RWPE1 (cell line): ENCODE measurements at regions of chr11 and their contacts with region 1.

Region 1: DNA sequence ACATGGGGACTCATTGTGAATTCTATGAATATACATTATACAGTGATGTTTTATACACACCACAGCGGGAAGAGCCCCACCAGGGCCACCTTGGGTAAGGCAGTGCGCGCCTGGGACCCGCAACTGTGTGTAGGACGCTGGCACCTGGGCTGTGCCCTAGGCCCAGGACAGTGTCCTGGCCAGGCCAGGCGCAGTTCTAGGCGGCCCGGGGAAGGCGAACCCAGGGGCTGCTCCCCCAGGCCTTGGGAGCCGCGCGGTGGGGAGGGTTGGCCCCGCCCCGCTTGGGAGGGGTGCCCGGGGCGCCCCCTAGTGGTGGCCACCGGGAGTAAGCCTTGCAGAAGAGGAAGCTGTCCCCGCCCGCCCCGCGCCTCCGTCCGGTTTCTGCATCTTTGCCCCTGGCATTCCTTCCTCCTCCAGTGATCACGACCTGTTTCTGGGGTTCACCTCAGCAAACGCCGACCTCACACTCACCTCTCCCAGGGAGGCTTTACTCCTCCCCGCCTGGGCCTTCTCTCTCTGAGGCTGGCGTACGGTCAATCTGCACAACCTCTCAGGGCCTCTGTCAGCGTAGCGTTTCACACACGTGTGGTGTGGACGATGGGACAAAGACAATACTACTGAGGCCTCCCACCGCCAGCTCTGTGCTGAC is 9.5 kb upstream of the EHD1 start:
- DNase-seq: peak; percentile 72
- H3K27ac ChIP-seq: peak overlapping the region; percentile 42
- CTCF ChIP-seq: peak; percentile 95

Region 2: GRCh38 chr11:64854534-64855429 is 33.1 kb before region 1 on chr11:
- CTCF ChIA-PET with region 1: interaction called, 62 read pairs
- POLR2A ChIA-PET with region 1: no interaction called
- DNase-seq: peak; percentile 96
- H3K27ac ChIP-seq: peak overlapping the region; percentile 99
- CTCF ChIP-seq: no peak

Region 3: GRCh38 chr11:64864473-64865285 is 23.2 kb before region 1 on chr11:
- CTCF ChIA-PET with region 1: interaction called, 16 read pairs
- POLR2A ChIA-PET with region 1: no interaction called
- DNase-seq: no peak
- H3K27ac ChIP-seq: peak overlapping the region; percentile 93
- CTCF ChIP-seq: no peak